ENCODE measurements at regions of chr1 and their contacts with region 1.

Region 1: DNA sequence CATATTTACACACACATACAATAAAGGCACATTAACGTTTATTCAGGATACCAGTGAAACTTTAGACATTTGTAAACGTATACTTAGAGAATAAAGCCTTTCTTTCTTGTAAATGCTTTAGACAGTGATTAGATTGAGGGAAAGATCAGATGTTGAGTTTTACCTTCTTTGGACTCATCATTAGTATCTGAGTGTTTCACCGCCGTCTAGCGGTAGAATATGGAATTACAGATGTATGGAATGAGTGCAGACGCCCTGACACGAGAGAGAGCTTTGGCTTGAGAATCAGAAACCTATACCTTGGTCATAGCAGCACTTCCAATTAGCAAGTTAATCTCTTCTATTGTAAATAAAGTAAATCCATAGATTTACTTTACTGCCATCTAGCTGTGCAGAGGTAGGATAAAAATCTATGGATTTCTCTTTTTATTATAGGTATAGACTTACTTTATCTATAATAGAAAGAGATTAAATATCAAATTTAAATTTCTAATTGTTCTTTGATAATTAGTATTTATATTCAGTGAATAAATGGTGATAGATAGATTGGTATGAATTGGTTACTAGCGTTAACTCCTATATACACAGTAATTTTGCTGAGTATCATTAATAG is 12.6 kb downstream of the FLG2 start:
- DNase-seq: no peak
- H3K4me3 ChIP-seq: no peak overlapping the region
- H3K27ac ChIP-seq: no peak overlapping the region
- H3K4me1 ChIP-seq: no peaks in the 10 kb centered on the region
- H3K27me3 ChIP-seq: no peaks in the 10 kb centered on the region
- CTCF ChIP-seq: peak; percentile 53 to 88 (median 72)
- POLR2A ChIP-seq: no peak

Region 2: DNA sequence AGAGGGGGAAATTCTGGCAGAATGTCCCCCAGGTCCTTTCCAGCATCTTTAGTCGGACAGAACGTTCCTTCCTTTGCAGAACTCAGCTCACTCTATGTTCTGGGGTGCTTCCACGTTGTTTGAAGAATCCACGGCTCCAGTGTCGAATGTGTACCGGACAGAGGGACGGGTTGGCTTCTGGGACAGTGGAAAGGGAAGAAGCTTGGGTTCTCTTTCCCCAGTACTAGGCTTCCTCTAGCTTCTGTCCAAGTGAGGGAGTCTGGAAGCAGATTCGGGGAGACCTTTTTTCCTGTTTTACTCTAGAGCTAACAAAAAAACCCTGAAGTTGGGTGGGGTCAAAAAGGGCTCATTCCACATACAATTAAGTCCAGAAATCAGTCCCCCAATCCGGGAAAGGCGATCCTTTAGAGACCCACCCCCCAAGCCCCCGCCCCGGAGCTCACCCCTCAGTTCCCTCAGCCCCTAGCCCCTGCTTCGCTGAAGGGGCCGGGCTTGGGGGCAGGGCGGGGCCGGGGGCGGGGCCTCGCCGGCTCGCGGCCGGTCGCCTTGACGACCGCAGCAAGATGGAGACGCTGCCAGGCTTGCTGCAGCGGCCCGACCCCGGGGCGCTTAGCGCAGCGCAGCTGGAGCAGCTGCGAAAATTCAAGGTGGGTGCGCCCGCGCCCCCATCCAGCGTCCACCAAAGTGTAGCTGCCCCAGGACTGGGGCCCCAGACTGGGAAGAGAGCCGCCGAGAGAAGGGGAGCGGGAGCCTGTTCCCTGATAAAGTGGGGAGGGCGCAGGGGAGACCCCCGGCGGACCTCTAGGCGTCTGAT is 626.0 kb before region 1 on chr1 and contains the start of gene RIIAD1:
- intact Hi-C with region 1: no loop called
- DNase-seq: peak; percentile 87
- H3K4me3 ChIP-seq: peak within 1 kb of the TSS; percentile 36 to 66 (median 54)
- H3K27ac ChIP-seq: peak within 1 kb of the TSS in 7 of 8 donors; percentile 60 to 81 (median 69)
- H3K4me1 ChIP-seq: peaks cover 6 to 46% (median 32%) of the 10 kb centered on the region in 6 donors
- H3K27me3 ChIP-seq: peaks cover 2 to 90% (median 20%) of the 10 kb centered on the region in 7 donors
- CTCF ChIP-seq: no peak
- POLR2A ChIP-seq: no peak
- total RNA-seq, gene RIIAD1: 0.34 TPM in 1 of 7 donors, not detected in the others

Region 3: GRCh38 chr1:152440635-152441471 is 93.6 kb after region 1 on chr1:
- intact Hi-C with region 1: loop called (anchors 5 kb)
- DNase-seq: peak; percentile 88
- H3K4me3 ChIP-seq: no peak overlapping the region
- H3K27ac ChIP-seq: no peak overlapping the region
- H3K4me1 ChIP-seq: peaks cover 0 to 17% (median 7%) of the 10 kb centered on the region in 6 donors
- H3K27me3 ChIP-seq: peaks cover 0 to 10% (median 0%) of the 10 kb centered on the region in 7 donors
- CTCF ChIP-seq: peak; percentile 62 to 94 (median 82)
- POLR2A ChIP-seq: no peak

Region 4: DNA sequence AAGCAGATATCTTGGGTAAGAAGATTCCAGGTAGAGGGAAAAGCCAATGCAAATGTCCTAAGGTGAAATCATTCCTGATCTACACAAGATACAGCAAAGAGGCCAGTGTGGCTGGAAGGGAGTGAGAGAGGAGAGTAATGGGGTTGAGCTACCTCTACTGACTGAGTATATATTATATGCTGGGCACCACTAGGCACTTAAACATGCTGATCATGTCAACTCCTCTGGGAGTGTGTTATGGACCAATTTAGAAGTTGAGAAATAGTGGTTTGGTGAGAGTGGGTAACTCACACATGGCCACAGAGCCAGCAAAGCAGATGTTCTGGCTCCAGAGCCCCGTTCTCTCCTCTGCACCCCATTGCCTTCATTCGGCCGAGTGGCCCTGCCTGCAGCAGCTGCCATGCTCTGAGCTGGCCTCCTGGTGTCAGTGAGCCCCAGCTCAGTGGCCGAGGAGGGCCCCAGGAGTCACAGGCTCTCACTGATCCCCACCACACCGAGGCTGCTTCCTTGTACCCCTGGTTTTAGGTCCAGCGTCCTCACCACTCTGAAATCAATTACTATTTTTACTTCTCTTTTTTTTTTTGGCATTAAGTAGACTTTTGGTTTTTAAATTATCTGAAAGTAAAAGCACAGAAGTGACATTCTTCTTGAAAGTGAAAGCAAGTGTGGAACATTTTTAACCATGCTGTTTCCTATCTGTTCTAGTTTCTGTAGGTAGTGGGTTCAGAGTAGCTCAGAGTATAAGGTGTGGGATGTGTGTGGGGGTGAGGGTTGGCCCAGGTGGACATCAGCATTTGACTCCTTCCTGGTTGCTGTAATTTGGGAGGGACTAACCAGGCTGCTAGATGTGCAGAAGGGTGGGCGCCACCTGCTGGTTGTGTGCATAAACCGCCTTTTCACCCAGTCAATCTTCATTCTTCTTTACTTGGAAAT is 112.6 kb after region 1 on chr1:
- intact Hi-C with region 1: loop called (anchors 5 kb)
- DNase-seq: peak; percentile 89
- H3K4me3 ChIP-seq: peak overlapping the region in 2 of 8 donors; percentile 9 to 41
- H3K27ac ChIP-seq: peak overlapping the region; percentile 48 to 83 (median 79)
- H3K4me1 ChIP-seq: peaks cover 0 to 26% (median 13%) of the 10 kb centered on the region in 6 donors
- H3K27me3 ChIP-seq: no peaks in the 10 kb centered on the region
- CTCF ChIP-seq: peak; percentile 41 to 84 (median 69)
- POLR2A ChIP-seq: no peak

Region 5: GRCh38 chr1:152613511-152613910 is 266.3 kb after region 1 on chr1 and contains the start of gene LCE3B:
- intact Hi-C with region 1: no loop called
- DNase-seq: no peak
- H3K4me3 ChIP-seq: no peak within 1 kb of the TSS
- H3K27ac ChIP-seq: no peak within 1 kb of the TSS
- H3K4me1 ChIP-seq: no peaks in the 10 kb centered on the region
- H3K27me3 ChIP-seq: no peaks in the 10 kb centered on the region
- CTCF ChIP-seq: no peak
- POLR2A ChIP-seq: no peak
- total RNA-seq, gene LCE3B: not detected

Measured in spleen (tissue), 13 donors.